SK-N-SH (cell line): ENCODE measurements at regions of chr5 and their contacts with region 1.

Region 1: GRCh38 chr5:61658592-61659008 is 326.5 kb downstream of the ZSWIM6 start:
- DNase-seq: peak; percentile 76
- H3K4me3 ChIP-seq: no peak overlapping the region; a peak in 1 of 4 replicates
- H3K27ac ChIP-seq: no peak overlapping the region
- H3K4me1 ChIP-seq: peaks cover 0 to 4% of the 10 kb centered on the region in 2 experiments; a peak in 2 of 4 replicates
- H3K27me3 ChIP-seq: peaks cover 15% of the 10 kb centered on the region
- CTCF ChIP-seq: peak; percentile 91
- EP300 ChIP-seq: no peak
- RAD21 ChIP-seq: peak; percentile 88

Region 2: GRCh38 chr5:61538722-61539501 is 119.7 kb before region 1 on chr5:
- CTCF ChIA-PET with region 1: interaction called, 10 read pairs
- POLR2A ChIA-PET with region 1: no interaction called
- DNase-seq: no peak
- H3K4me3 ChIP-seq: no peak overlapping the region
- H3K27ac ChIP-seq: no peak overlapping the region
- H3K4me1 ChIP-seq: no peaks in the 10 kb centered on the region
- H3K27me3 ChIP-seq: no peaks in the 10 kb centered on the region
- CTCF ChIP-seq: no peak
- EP300 ChIP-seq: no peak
- RAD21 ChIP-seq: no peak

Region 3: DNA sequence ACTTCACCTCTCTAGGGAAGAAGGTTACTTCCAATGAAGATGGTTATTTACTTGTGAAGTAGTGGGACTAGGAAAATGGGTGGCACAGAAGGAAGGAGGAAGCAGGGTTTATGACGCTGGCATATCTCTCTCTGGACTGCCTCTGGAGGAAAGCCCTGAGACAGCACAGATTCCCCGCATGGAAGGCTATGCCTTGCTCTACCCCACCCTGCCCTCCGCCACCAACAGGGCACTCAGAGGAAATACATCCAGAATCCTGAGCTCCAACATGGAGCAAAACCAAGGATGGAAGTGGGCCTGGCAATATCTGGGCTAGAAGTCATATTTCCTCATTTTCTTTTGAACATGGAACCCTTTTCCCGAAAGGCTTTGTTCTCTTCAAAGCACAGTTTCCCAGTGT is 20.4 kb after region 1 on chr5:
- CTCF ChIA-PET with region 1: interaction called, 15 read pairs
- POLR2A ChIA-PET with region 1: no interaction called
- DNase-seq: no peak
- H3K4me3 ChIP-seq: no peak overlapping the region
- H3K27ac ChIP-seq: no peak overlapping the region
- H3K4me1 ChIP-seq: no peaks in the 10 kb centered on the region; a peak in 1 of 4 replicates
- H3K27me3 ChIP-seq: no peaks in the 10 kb centered on the region
- CTCF ChIP-seq: peak; percentile 16; the same call in 1 of the 2 replicates
- EP300 ChIP-seq: no peak
- RAD21 ChIP-seq: no peak

Region 4: GRCh38 chr5:61758711-61759495 is 100.3 kb after region 1 on chr5:
- CTCF ChIA-PET with region 1: no interaction called
- POLR2A ChIA-PET with region 1: no interaction called
- DNase-seq: no peak
- H3K4me3 ChIP-seq: no peak overlapping the region
- H3K27ac ChIP-seq: no peak overlapping the region
- H3K4me1 ChIP-seq: no peaks in the 10 kb centered on the region
- H3K27me3 ChIP-seq: no peaks in the 10 kb centered on the region; the same call in 1 of the 2 replicates
- CTCF ChIP-seq: no peak
- EP300 ChIP-seq: no peak
- RAD21 ChIP-seq: no peak

Region 5: GRCh38 chr5:61910771-61911170 is 252.2 kb after region 1 on chr5:
- CTCF ChIA-PET with region 1: no interaction called
- POLR2A ChIA-PET with region 1: no interaction called
- DNase-seq: no peak
- H3K4me3 ChIP-seq: no peak overlapping the region
- H3K27ac ChIP-seq: no peak overlapping the region
- H3K4me1 ChIP-seq: no peaks in the 10 kb centered on the region
- H3K27me3 ChIP-seq: no peaks in the 10 kb centered on the region
- CTCF ChIP-seq: no peak
- EP300 ChIP-seq: no peak
- RAD21 ChIP-seq: no peak

Region 6: DNA sequence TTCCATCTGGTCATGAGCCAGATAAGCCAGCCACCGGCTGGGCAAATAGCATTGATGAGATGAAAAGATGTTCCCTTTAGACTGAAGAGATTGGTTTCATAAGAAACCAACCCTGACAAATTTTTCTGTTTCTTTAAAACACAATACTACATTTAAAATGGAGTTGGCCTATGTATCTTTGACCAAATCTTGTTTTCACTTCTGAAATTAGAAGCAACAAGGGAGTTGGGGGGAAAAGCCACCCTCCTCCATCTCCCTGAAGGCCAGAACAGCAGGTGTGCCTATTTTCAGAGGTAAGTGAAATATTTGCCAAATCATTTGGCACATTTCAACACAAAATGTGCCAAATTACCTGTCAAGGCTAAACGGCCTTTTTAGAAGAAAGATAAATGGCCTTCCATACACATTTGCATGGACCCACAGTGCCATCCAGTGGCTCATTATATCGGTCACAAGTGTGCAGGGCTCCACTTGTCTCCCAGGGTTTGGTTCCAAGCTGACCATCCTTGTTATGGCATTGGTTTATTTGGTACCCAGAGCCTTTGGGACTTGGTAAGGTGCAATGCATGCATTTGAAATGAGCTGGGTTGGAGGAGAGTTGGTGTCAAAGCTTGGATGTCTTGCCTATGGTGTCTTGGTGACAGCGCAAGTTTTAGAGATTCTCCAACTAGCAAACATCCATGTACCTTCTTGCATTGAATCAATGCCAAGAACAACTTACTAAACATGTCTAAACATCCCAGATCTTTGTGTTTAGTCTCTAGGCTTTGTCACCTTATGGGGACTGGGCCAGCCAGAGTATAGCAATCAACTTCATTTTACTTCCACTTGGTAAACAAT is 275.4 kb after region 1 on chr5:
- CTCF ChIA-PET with region 1: interaction called, 11 read pairs
- POLR2A ChIA-PET with region 1: no interaction called
- DNase-seq: peak; percentile 62
- H3K4me3 ChIP-seq: peak overlapping the region in 1 of 2 experiments; percentile 6; a peak in 2 of 4 replicates
- H3K27ac ChIP-seq: no peak overlapping the region
- H3K4me1 ChIP-seq: no peaks in the 10 kb centered on the region; a peak in 1 of 4 replicates
- H3K27me3 ChIP-seq: no peaks in the 10 kb centered on the region
- CTCF ChIP-seq: peak; percentile 65
- EP300 ChIP-seq: no peak
- RAD21 ChIP-seq: peak; percentile 94